ENCODE measurements at regions of chr4 and their contacts with region 1.

Region 1: DNA sequence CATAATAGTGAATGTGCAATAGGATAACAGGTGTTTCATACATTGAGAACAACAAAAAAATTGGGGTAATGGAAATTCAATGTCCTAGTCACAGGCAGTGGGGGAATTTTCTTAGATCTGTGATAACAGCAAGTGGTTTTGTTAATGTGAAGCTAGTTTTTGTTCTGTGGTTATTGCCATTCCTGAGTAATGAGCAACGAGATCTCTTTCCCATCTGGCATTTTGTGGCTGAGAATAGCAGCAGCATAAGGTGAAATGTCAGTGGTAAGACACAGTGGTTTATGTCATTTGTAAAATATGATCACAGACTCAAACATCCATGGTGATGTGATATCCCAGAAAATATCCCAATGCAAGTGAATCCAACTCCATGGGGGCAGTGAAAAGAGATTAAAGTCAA is 497.5 kb downstream of the KCNIP4 start:
- DNase-seq: no peak
- H3K4me3 ChIP-seq: no peak overlapping the region
- H3K27ac ChIP-seq: no peak overlapping the region
- H3K4me1 ChIP-seq: 0 out of 4 replicates have a peak, but pooled peaks cover 0 to 4% of the 10 kb centered on the region in 2 experiments
- H3K27me3 ChIP-seq: peaks cover 8% of the 10 kb centered on the region; the same call in 1 of the 2 replicates
- CTCF ChIP-seq: no peak
- EP300 ChIP-seq: peak in 1 of 2 experiments; percentile 60; a peak in 2 of 4 replicates
- RAD21 ChIP-seq: no peak

Region 2: GRCh38 chr4:21167711-21168110 is 283.3 kb before region 1 on chr4:
- CTCF ChIA-PET with region 1: no interaction called
- POLR2A ChIA-PET with region 1: no interaction called
- DNase-seq: no peak
- H3K4me3 ChIP-seq: no peak overlapping the region
- H3K27ac ChIP-seq: no peak overlapping the region
- H3K4me1 ChIP-seq: no peaks in the 10 kb centered on the region
- H3K27me3 ChIP-seq: no peaks in the 10 kb centered on the region
- CTCF ChIP-seq: no peak
- EP300 ChIP-seq: no peak
- RAD21 ChIP-seq: no peak

Region 3: GRCh38 chr4:21242163-21242562 is 208.9 kb before region 1 on chr4:
- CTCF ChIA-PET with region 1: no interaction called
- POLR2A ChIA-PET with region 1: no interaction called
- DNase-seq: no peak
- H3K4me3 ChIP-seq: no peak overlapping the region
- H3K27ac ChIP-seq: no peak overlapping the region
- H3K4me1 ChIP-seq: no peaks in the 10 kb centered on the region
- H3K27me3 ChIP-seq: no peaks in the 10 kb centered on the region
- CTCF ChIP-seq: no peak
- EP300 ChIP-seq: no peak
- RAD21 ChIP-seq: no peak

Region 4: DNA sequence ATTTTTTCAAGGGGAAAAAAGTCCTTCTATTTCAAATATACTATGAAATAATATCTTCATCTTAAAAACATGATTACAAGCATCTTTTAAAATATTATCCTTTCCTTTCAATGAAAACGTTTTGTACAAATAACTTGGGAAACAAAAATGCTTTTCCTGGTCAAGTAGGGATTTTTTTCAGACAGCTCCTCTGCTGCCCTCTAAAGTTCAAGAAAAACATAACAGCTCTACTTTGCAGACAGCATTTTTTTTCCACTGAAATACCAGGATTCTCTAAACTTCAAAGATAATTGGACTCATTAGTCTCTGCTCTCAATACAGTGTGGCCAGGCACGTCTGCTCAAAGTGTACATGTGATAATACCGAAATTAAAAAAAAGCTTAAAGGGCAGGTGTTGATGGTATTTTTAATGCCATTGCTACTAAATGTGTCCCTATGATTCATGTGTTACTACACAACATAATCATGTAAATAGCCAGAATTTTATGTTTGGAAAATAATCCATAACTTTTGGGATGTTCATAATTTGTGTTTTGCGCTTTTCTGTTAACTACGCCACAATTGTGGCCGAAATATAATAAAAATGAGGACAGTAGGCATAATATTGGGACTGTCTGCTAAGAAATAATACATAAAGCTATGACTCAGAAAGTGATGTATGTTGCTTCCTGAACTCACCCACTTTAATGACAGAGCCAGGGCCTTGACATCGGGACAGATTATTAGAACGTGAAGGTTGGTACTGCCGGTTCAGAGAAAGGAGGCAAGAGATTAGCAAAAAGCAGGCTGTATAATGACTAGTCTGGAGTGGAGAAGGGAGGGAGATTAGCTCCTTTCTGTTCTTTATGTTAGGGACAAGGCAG is 18.6 kb after region 1 on chr4:
- CTCF ChIA-PET with region 1: interaction called, 12 read pairs
- POLR2A ChIA-PET with region 1: no interaction called
- DNase-seq: peak; percentile 20
- H3K4me3 ChIP-seq: no peak overlapping the region; a peak in 1 of 4 replicates
- H3K27ac ChIP-seq: peak overlapping the region in 1 of 2 experiments; percentile 72; a peak in 2 of 4 replicates
- H3K4me1 ChIP-seq: peaks cover 0 to 16% of the 10 kb centered on the region in 2 experiments; a peak in 2 of 4 replicates
- H3K27me3 ChIP-seq: no peaks in the 10 kb centered on the region
- CTCF ChIP-seq: peak; percentile 71
- EP300 ChIP-seq: no peak
- RAD21 ChIP-seq: peak; percentile 83

Region 5: DNA sequence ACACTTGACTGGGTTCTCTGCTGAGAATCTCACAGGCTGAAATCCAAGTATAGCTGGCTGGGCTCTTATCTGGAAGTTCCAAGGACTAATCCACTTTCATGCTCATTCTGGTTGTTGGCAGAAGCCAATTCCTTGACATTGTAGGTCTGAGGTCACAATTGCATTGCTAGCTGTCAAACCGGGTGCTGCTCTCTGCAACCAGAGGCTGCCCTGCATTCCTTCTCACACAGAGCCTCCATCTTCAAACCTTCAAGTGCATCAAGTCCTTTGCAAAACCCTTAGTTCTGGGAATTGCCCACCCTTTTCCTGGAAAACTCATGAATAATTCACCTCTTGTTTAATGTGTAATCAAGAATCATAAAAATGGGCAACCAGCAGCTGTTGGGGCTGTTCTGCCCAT is 93.4 kb after region 1 on chr4:
- CTCF ChIA-PET with region 1: no interaction called
- POLR2A ChIA-PET with region 1: no interaction called
- DNase-seq: no peak
- H3K4me3 ChIP-seq: no peak overlapping the region
- H3K27ac ChIP-seq: no peak overlapping the region
- H3K4me1 ChIP-seq: peaks cover 0 to 3% of the 10 kb centered on the region in 2 experiments; a peak in 1 of 4 replicates
- H3K27me3 ChIP-seq: no peaks in the 10 kb centered on the region
- CTCF ChIP-seq: no peak
- EP300 ChIP-seq: no peak
- RAD21 ChIP-seq: no peak